ENCODE measurements at regions of chr14 and their contacts with region 1.

Region 1: DNA sequence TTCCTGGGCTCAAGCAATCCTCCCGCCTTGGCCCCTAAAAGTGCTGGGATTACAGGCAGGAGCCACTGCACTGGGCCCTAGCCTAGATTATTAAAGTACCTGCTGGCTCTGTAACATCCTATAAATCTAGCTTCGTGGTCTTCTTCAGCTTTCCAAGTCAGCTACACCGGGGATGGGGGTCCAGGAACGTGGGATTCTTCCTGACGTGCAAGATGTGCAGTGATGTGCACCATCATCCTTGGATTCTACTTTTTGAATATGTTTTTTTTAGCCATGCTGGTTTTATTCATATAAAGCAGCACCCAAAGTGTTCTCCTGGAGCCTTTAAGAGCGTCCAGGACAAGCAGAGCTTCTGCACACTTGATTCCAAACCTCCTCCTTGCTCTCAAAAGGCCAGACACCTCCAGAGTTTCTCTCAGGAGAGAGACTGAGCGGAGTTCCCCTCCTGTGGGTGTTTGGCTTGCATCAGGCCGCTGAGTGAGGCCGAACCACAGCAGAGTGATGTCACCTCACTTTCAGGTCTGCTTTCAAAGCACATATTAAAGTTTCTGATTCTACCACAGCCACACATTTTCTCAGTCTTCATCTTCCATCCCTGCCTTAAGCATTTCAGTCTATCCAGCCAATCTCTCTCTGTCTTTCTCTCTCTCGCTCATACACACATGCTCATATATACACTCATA is 33.4 kb downstream of the VCPKMT start:
- DNase-seq: peak; percentile 84
- H3K4me3 Mint-ChIP-seq: peak overlapping the region; percentile 16
- H3K27ac Mint-ChIP-seq: peak overlapping the region; percentile 90
- H3K4me1 Mint-ChIP-seq: peaks cover 70% of the 10 kb centered on the region
- H3K27me3 Mint-ChIP-seq: no peaks in the 10 kb centered on the region

Region 2: DNA sequence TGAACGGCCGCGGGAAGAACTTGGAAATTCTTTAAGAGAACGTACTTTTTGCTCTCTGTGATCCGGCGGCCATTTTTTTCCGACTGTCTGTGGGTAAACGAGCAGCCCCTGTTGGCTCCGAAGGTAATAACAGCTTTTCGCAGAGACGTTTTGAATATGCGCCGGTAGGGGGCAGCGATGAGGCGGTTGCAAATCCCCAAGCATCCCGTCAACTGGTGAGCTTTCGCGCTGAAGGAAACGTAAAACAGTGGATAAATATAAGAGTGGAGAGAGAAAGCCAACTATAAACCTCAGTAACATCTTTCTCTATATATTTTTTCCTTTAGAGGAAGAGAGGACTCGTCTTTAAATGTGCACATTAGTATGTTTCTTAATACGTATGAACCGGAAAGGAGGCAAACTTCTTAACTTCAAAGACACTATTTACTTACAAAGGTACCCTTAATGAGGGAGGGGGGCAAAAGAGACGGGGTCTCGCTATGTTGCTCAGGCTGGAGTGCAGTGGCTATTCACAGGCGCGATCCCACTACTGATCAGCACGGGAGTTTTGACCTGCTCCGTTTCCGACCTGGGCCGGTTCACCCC is 220.7 kb before region 1 on chr14:
- intact Hi-C with region 1: loop called (anchors 1 kb)
- DNase-seq: peak; percentile 81
- H3K4me3 Mint-ChIP-seq: no peak overlapping the region
- H3K27ac Mint-ChIP-seq: no peak overlapping the region
- H3K4me1 Mint-ChIP-seq: peaks cover 10% of the 10 kb centered on the region
- H3K27me3 Mint-ChIP-seq: peaks cover 6% of the 10 kb centered on the region

Region 3: GRCh38 chr14:49971156-49972130 is 111.5 kb before region 1 on chr14:
- intact Hi-C with region 1: loop called (anchors 1 kb)
- DNase-seq: peak; percentile 48
- H3K4me3 Mint-ChIP-seq: peak overlapping the region; percentile 83
- H3K27ac Mint-ChIP-seq: peak overlapping the region; percentile 99
- H3K4me1 Mint-ChIP-seq: peaks cover 61% of the 10 kb centered on the region
- H3K27me3 Mint-ChIP-seq: no peaks in the 10 kb centered on the region

Region 4: GRCh38 chr14:50061664-50062437 is 21.1 kb before region 1 on chr14:
- intact Hi-C with region 1: loop called (anchors 1 kb)
- DNase-seq: peak; percentile 67
- H3K4me3 Mint-ChIP-seq: peak overlapping the region; percentile 99
- H3K27ac Mint-ChIP-seq: peak overlapping the region; percentile 100
- H3K4me1 Mint-ChIP-seq: peaks cover 94% of the 10 kb centered on the region
- H3K27me3 Mint-ChIP-seq: no peaks in the 10 kb centered on the region

Region 5: DNA sequence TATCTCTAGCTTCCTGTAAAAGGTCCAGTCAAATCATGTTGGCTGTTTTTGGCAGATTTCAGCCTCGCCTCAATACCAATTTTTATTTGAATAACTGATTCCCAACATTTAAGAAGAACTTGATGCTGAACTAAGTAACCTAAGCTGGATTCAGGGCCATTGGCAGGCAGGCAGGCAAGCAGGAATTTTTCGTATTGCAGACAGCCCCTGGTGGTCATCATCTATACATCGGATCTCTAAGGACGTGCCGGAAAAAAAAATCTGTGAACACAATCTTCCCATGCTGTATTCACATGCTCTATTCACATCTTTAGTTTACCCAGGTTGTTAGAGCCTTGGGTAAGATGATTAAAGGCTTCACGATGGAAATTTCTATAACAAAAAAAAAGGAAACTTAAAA is 26.4 kb after region 1 on chr14:
- intact Hi-C with region 1: loop called (anchors 1 kb)
- DNase-seq: no peak
- H3K4me3 Mint-ChIP-seq: no peak overlapping the region
- H3K27ac Mint-ChIP-seq: no peak overlapping the region
- H3K4me1 Mint-ChIP-seq: peaks cover 28% of the 10 kb centered on the region
- H3K27me3 Mint-ChIP-seq: no peaks in the 10 kb centered on the region

Region 6: GRCh38 chr14:50447461-50447860 is 364.5 kb after region 1 on chr14:
- intact Hi-C with region 1: no loop called
- DNase-seq: no peak
- H3K4me3 Mint-ChIP-seq: no peak overlapping the region
- H3K27ac Mint-ChIP-seq: no peak overlapping the region
- H3K4me1 Mint-ChIP-seq: no peaks in the 10 kb centered on the region
- H3K27me3 Mint-ChIP-seq: no peaks in the 10 kb centered on the region